ENCODE measurements at regions of chr10 and their contacts with region 1.

Region 1: DNA sequence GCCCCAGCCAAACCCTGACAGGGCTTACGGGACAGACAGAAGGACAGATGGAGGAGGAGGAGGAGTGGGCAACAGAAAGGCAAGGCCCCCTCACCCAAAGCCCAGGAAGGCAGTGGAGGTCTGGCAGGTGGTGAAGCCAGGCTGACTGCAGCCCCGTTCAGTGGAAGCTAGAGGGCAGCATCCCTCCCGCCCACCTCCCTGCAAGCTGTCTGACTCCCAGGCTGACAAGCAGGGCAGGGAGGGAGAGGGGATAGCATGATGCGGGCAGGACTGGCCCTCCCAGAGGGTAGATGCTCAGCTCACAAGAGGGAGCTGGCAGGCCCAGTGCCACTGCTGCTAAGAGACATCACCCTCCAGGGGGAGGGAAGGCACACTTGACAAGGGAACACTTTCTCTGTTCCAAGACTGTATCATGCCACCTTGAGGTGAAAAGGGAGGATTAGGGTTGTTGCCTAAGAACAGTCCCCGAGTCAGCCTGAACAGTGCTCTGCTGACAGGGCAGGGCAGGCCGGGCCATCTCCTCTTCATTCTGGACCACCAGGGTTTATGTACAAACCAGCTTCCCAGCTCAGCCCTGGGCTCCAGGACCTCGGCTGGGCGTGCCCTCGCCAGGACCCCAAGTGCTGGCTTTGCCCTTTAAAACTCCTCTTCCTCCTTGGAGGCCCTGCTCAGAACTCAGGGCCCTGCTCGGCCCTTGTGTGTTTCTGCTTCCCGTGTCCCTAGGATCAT is 61.8 kb downstream of the RASGEF1A start:
- DNase-seq: peak; percentile 78
- ATAC-seq: peak; percentile 74
- H3K4me3 Mint-ChIP-seq: no peak overlapping the region
- H3K27ac Mint-ChIP-seq: no peak overlapping the region
- H3K4me1 Mint-ChIP-seq: peaks cover 15% of the 10 kb centered on the region
- H3K27me3 Mint-ChIP-seq: no peaks in the 10 kb centered on the region

Region 2: GRCh38 chr10:43024524-43024923 is 180.6 kb before region 1 on chr10:
- CTCF ChIA-PET with region 1: no interaction called
- POLR2A ChIA-PET with region 1: no interaction called
- DNase-seq: no peak
- ATAC-seq: no peak
- H3K4me3 Mint-ChIP-seq: no peak overlapping the region
- H3K27ac Mint-ChIP-seq: no peak overlapping the region
- H3K4me1 Mint-ChIP-seq: no peaks in the 10 kb centered on the region
- H3K27me3 Mint-ChIP-seq: no peaks in the 10 kb centered on the region

Region 3: GRCh38 chr10:43170491-43170890 is 34.6 kb before region 1 on chr10:
- CTCF ChIA-PET with region 1: interaction called, 13 read pairs
- POLR2A ChIA-PET with region 1: no interaction called
- DNase-seq: no peak
- ATAC-seq: no peak
- H3K4me3 Mint-ChIP-seq: no peak overlapping the region
- H3K27ac Mint-ChIP-seq: no peak overlapping the region
- H3K4me1 Mint-ChIP-seq: peaks cover 30% of the 10 kb centered on the region
- H3K27me3 Mint-ChIP-seq: no peaks in the 10 kb centered on the region

Region 4: DNA sequence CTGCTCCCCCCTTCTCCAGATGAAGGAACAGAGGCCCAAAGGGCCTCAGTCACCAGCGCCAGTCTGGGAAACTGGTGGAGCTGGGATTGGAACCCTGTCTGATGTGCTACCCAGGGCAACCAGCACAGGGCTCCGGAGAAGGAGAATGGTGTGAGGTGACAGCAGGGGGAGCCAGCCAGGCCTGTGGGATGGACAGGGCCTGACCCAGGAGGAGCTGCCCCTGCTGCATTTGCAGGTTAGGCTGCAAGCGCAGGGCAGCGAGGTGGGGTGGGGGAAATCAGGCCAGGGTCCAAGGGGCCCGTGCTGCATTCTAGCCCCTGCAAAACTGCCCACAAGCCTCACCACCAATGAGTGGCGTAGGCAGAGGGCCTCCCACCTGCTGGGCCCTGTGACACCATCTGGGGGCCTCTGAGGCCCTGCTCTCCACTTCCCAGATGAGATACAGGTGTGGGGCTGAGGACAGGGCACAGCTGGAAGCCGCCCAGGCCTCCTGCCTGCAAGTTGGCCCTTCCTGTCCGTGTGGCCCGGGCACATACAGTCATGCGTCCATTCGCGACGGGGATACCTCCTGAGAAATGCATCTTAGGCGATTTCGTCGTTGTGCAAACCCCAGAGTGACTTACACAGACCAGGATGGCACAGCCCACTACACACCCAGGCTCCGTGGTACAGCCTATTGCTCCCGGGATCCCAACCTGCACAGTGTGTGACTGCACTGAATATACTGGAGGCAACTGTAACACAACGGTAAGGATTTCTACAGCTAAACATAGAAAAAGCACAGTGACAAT is 16.5 kb after region 1 on chr10:
- CTCF ChIA-PET with region 1: interaction called, 24 read pairs
- POLR2A ChIA-PET with region 1: no interaction called
- DNase-seq: no peak
- ATAC-seq: peak; percentile 63
- H3K4me3 Mint-ChIP-seq: no peak overlapping the region
- H3K27ac Mint-ChIP-seq: no peak overlapping the region
- H3K4me1 Mint-ChIP-seq: peaks cover 8% of the 10 kb centered on the region
- H3K27me3 Mint-ChIP-seq: peaks cover 22% of the 10 kb centered on the region

Region 5: GRCh38 chr10:43239771-43240170 is 34.7 kb after region 1 on chr10:
- CTCF ChIA-PET with region 1: interaction called, 10 read pairs
- POLR2A ChIA-PET with region 1: no interaction called
- DNase-seq: no peak
- ATAC-seq: no peak
- H3K4me3 Mint-ChIP-seq: no peak overlapping the region
- H3K27ac Mint-ChIP-seq: no peak overlapping the region
- H3K4me1 Mint-ChIP-seq: no peaks in the 10 kb centered on the region
- H3K27me3 Mint-ChIP-seq: peaks cover 26% of the 10 kb centered on the region

Region 6: GRCh38 chr10:43265799-43266721 is 61.0 kb after region 1 on chr10:
- CTCF ChIA-PET with region 1: interaction called, 10 read pairs
- POLR2A ChIA-PET with region 1: no interaction called
- DNase-seq: peak; percentile 66
- ATAC-seq: peak; percentile 78
- H3K4me3 Mint-ChIP-seq: peak overlapping the region; percentile 71
- H3K27ac Mint-ChIP-seq: peak overlapping the region; percentile 20
- H3K4me1 Mint-ChIP-seq: peaks cover 5% of the 10 kb centered on the region
- H3K27me3 Mint-ChIP-seq: peaks cover 52% of the 10 kb centered on the region

Region 7: GRCh38 chr10:43348511-43349312 is 143.6 kb after region 1 on chr10:
- CTCF ChIA-PET with region 1: interaction called, 20 read pairs
- POLR2A ChIA-PET with region 1: no interaction called
- DNase-seq: peak; percentile 94
- ATAC-seq: peak; percentile 100
- H3K4me3 Mint-ChIP-seq: no peak overlapping the region
- H3K27ac Mint-ChIP-seq: peak overlapping the region; percentile 70
- H3K4me1 Mint-ChIP-seq: peaks cover 38% of the 10 kb centered on the region
- H3K27me3 Mint-ChIP-seq: peaks cover 16% of the 10 kb centered on the region